Activated CD4-positive, alpha-beta T cell treated with anti-CD3 and anti-CD28 coated beads, Interleukin-2, amount 10 ng/mL, durations not matched to agents 24 days and 14 days (primary cell): ENCODE measurements at regions of chr12 and their contacts with region 1.

Region 1: DNA sequence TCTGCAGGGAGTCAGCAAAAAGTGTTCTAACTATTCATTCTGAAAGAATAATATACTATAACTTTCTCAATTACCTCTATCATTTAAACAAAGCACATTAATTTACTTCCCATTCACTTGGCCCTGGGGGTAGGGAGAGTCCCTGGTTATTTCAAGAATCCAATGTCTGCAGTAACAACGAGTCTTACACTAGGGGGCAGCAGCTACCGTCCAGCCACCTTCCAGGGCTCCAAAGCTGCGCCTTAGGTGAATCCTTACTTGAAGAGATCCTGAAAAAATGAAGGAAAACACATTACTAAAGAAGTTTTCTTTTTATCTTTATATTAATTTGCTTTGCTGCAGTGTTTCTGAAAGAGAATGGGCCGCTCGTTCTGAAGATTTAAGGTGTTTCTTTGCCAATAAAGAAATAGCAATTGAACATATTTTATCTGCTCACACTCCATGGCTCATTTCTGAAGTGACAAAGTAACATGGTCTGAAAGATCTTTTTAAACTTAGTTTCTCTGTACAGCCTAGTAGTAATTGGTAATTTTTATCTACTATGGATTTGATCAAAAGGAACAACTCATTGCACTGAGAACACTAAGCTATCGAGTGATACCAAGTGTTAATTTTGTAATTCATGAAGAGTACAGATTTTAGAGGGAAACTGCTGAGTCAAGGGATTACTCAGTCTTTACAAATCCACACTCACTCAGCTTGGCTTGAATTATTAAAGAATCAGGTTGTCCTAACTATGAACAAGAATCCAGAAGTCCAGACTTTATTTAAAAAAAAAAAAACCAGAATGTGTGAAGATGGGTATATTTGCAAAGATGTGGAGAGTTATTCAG is 27.6 kb downstream of the BHLHE41 start:
- DNase-seq: peak; percentile 85
- H3K4me3 Mint-ChIP-seq: no peak overlapping the region
- H3K27ac Mint-ChIP-seq: no peak overlapping the region
- H3K4me1 Mint-ChIP-seq: no peaks in the 10 kb centered on the region
- H3K27me3 Mint-ChIP-seq: peaks cover 33% of the 10 kb centered on the region

Region 2: GRCh38 chr12:26068503-26068902 is 28.8 kb before region 1 on chr12:
- intact Hi-C with region 1: no loop called
- DNase-seq: no peak
- H3K4me3 Mint-ChIP-seq: no peak overlapping the region
- H3K27ac Mint-ChIP-seq: no peak overlapping the region
- H3K4me1 Mint-ChIP-seq: no peaks in the 10 kb centered on the region
- H3K27me3 Mint-ChIP-seq: peaks cover 16% of the 10 kb centered on the region

Region 3: DNA sequence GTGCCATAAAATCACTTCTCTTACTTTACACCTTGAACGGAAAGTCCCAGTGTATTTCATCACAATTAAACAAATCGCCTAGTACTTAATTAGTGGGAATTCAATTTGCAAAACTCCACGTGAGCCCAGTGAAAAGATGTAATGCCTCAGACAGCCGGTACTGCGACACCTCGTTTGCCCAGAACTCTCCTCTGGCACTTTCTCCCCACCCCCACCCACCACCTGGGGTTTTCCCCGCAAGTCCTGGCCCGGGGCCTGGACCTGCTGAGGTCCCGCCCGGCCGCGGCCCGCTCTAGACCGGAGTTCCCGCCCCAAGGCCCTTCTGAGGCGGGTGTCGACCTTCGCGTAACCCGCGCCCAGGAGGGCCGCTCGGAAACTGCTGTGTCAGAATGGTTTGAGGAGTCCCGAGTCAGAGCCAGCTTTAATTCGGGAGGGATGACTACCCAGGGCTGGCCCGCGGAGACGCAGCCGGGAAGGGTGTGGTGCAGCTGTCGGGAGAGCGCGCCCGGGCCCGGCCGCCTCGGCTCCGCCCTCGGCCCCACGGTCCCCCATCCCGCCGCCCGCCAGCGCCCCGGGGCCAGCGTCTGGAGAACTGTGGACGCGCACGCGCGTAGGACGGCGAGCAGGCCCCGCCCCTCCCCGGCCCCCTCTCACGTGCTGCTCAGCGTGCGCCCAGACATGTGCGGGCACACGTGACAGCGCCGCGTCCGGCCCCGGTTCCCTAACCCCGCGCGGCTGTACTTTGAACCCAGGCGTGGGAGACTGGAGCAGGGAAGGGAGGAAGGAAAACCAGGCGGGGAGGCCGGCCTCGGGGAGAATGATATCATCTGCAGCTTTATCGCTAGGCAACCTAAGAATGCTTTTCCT is 16.8 kb after region 1 on chr12:
- intact Hi-C with region 1: no loop called
- DNase-seq: peak; percentile 84
- H3K4me3 Mint-ChIP-seq: peak overlapping the region; percentile 75
- H3K27ac Mint-ChIP-seq: no peak overlapping the region
- H3K4me1 Mint-ChIP-seq: peaks cover 6% of the 10 kb centered on the region
- H3K27me3 Mint-ChIP-seq: peaks cover 77% of the 10 kb centered on the region

Region 4: DNA sequence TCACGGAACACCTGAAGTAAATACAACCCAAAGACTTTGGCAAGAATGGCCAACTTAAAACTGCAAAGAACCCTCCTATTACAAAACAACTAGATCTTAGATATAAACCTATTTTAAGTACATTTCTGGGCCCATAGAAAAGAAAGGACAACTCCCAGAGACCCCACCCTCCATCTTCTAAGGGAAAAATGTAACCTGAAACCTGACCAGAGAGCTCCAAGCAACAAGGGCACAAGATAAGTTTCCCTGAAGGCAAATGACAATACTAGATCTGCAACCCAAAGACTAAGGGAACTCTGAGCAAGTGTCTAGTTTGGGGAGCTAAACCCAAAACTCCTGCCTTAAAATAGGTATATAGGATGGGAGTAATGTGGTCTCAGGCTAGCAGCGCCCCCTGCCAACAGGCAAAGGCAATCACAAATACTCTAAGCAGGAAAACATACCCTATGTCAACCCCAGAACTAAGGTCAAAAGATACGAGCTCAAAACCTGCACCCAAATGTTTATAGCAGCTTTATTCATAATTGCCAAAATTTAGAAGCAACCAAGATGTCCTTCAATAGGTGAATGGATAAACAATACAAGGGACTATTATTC is 516.9 kb after region 1 on chr12:
- intact Hi-C with region 1: loop called (anchors 1 kb)
- DNase-seq: peak; percentile 65
- H3K4me3 Mint-ChIP-seq: no peak overlapping the region
- H3K27ac Mint-ChIP-seq: no peak overlapping the region
- H3K4me1 Mint-ChIP-seq: no peaks in the 10 kb centered on the region
- H3K27me3 Mint-ChIP-seq: no peaks in the 10 kb centered on the region

Region 5: DNA sequence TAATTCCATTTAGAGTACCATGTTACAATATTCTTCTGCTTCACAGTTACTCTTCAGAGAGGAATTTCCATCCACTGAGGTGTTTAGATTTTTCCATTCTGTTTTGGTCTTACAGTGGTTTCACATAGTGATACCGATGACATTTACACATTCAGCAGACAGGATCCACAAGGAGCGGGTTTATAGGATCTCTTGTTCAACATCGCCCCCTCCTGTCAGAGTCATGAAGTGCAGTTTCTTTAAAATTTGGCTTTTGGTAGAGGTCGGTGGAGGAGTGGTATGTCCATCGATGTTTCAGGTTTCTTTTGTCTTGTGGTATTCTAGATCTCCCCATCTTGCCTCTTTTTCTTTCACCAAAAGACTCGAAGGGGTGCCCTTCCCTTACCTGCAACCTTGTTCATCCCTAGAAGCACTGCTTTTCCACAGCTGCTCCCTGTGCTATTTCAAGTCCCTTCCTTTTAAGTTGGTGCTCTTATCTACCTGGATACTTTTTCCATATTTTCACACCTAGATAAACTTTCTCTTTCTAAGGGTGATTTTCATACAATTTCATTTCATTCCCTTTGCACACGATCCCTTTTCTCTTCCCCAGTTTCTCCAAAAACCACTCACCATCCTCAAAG is 554.4 kb after region 1 on chr12:
- intact Hi-C with region 1: loop called (anchors 1 kb)
- DNase-seq: peak; percentile 85
- H3K4me3 Mint-ChIP-seq: no peak overlapping the region
- H3K27ac Mint-ChIP-seq: no peak overlapping the region
- H3K4me1 Mint-ChIP-seq: peaks cover 4% of the 10 kb centered on the region
- H3K27me3 Mint-ChIP-seq: no peaks in the 10 kb centered on the region

Region 6: GRCh38 chr12:26701604-26702215 is 604.4 kb after region 1 on chr12:
- intact Hi-C with region 1: loop called (anchors 1 kb)
- DNase-seq: no peak
- H3K4me3 Mint-ChIP-seq: no peak overlapping the region
- H3K27ac Mint-ChIP-seq: no peak overlapping the region
- H3K4me1 Mint-ChIP-seq: peaks cover 6% of the 10 kb centered on the region
- H3K27me3 Mint-ChIP-seq: no peaks in the 10 kb centered on the region

Region 7: GRCh38 chr12:26884765-26885576 is 787.7 kb after region 1 on chr12:
- intact Hi-C with region 1: loop called (anchors 5 kb)
- DNase-seq: peak; percentile 96
- H3K4me3 Mint-ChIP-seq: peak overlapping the region; percentile 61
- H3K27ac Mint-ChIP-seq: no peak overlapping the region
- H3K4me1 Mint-ChIP-seq: peaks cover 13% of the 10 kb centered on the region
- H3K27me3 Mint-ChIP-seq: peaks cover 19% of the 10 kb centered on the region